ENCODE measurements at regions of chr16 and their contacts with region 1.

Region 1: DNA sequence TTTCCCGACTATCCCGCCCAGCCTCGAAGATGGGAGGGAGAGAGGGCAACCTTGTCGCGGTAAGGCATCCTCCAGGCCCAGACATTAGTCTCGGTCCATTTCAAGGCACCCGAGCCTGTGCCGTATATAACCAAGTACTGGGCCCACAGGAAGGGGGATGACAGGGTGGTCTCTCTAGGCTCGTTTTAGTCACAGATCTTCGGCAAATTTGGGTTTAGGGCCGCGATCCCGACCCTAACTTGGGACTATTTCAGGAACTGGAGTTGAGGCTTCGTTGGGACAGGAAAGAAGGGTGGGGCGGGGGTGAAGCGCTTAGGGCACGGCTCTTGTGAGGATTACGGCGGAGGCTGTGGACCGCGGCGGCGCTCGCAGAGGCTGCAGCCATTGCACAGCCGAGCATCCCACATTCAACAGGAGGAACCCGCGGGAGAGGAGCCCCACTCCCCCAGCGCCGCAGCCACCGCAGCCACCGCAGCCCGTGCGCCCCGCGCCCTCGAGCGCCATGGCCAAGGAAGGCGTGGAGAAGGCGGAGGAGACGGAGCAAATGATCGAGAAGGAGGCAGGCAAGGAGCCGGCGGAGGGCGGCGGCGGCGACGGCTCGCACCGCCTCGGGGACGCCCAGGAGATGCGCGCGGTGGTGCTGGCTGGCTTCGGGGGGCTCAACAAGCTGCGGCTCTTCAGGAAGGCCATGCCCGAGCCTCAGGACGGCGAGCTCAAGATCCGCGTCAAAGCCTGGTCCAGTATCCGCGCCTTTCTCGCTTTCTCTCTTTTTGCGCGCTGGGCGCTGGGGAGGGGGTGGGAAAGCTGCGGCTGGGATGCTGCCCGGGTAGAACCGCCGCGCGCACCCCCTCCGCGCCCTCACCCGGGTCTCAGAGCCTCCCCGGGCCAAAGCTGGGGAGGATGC is at the start of gene VAT1L:
- DNase-seq: peak; percentile 38 to 76 (median 44)
- H3K4me3 ChIP-seq: peak within 1 kb of the TSS in 2 of 4 donors; percentile 15 to 71
- H3K27ac ChIP-seq: peak within 1 kb of the TSS in 1 of 5 donors; percentile 49
- H3K4me1 ChIP-seq: peaks cover 0 to 6% of the 10 kb centered on the region in 2 donors
- H3K27me3 ChIP-seq: peaks cover 21% of the 10 kb centered on the region
- CTCF ChIP-seq: no peak
- POLR2A ChIP-seq: peak; percentile 20 to 34
- total RNA-seq, gene VAT1L: 18.1 to 103 (median 38.4) TPM

Region 2: DNA sequence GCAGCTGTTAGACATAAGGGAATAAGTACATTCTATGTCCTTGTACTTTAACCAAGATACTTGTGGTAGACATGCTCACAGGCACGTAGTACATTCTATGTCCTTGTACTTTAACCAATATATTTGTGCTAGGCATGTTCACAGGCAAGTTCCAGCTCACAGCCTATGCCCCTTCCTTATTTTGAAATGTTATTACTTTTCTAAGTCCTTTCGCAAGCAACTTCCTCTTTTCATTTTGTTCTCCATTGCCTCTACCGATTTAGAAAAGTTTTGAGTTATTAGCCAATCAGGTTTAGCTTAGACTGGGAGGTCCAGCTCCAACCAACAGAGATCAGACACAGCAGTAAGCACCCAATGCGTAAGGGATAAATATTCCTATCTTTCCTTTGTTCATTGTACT is 126.2 kb before region 1 on chr16:
- intact Hi-C with region 1: no loop called
- DNase-seq: no peak
- H3K4me3 ChIP-seq: no peak overlapping the region
- H3K27ac ChIP-seq: no peak overlapping the region
- H3K4me1 ChIP-seq: no peaks in the 10 kb centered on the region
- H3K27me3 ChIP-seq: no peaks in the 10 kb centered on the region
- CTCF ChIP-seq: no peak
- POLR2A ChIP-seq: no peak

Region 3: GRCh38 chr16:77850636-77851333 is 62.4 kb after region 1 on chr16:
- intact Hi-C with region 1: no loop called
- DNase-seq: peak in 1 of 7 donors; percentile 42
- H3K4me3 ChIP-seq: no peak overlapping the region
- H3K27ac ChIP-seq: no peak overlapping the region
- H3K4me1 ChIP-seq: no peaks in the 10 kb centered on the region
- H3K27me3 ChIP-seq: no peaks in the 10 kb centered on the region
- CTCF ChIP-seq: no peak
- POLR2A ChIP-seq: no peak

Region 4: GRCh38 chr16:77971306-77972271 is 183.2 kb after region 1 on chr16:
- intact Hi-C with region 1: loop called in 1 of 2 experiments (anchors 10 kb)
- DNase-seq: peak; percentile 78 to 94 (median 86)
- H3K4me3 ChIP-seq: no peak overlapping the region
- H3K27ac ChIP-seq: peak overlapping the region in 2 of 5 donors; percentile 27 to 51
- H3K4me1 ChIP-seq: peaks cover 0 to 8% of the 10 kb centered on the region in 2 donors
- H3K27me3 ChIP-seq: no peaks in the 10 kb centered on the region
- CTCF ChIP-seq: peak; percentile 82 to 92 (median 86)
- POLR2A ChIP-seq: no peak

Measured in adrenal gland (tissue), 19 donors.